OCI-LY7 (cell line): ENCODE measurements at regions of chr19 and their contacts with region 1.

Region 1: DNA sequence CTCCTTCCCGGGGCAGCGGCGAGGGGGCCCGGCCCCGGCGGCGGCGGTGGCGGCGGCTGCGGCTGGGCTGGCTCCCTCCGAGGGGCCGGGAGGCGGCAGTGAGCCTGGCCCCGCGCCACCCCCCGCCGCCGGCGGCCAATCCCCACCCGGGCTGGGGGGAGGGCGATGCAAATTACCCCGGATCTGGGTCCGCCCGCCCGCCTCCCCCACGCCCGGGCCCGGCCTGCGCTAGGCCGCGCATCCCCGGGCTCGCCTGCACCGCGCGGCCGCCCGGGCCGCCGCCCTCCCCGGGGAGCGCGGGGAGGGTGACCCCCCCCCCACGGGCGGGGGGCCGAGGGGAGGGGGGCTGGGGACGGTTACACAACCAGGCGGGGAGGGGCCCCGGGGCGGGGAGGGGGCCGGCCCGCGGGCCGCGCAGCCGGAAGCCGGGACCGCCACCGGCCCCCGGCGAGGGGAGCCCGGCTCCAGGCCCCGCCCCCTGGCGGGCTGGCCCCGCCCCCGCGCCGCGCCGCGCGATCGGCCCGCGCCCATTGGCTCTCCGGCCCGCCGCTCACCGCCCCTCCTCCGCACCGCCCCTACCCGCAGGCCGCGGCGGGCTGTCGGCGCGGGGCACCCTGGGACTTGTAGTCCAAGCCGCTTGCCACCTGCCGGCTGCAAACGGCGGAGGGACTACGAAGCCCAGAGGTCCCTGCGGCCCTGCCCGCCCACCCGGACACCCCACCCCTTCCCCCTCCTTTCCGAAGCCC is 1.1 kb downstream of the ZBTB7A start:
- DNase-seq: peak; percentile 98
- H3K4me3 ChIP-seq: peak overlapping the region; percentile 100
- H3K27ac ChIP-seq: no peak overlapping the region
- H3K4me1 ChIP-seq: peaks cover 51% of the 10 kb centered on the region
- CTCF ChIP-seq: no peak

Region 2: GRCh38 chr19:4007021-4007835 is 58.4 kb before region 1 on chr19 and contains the start of gene PIAS4:
- CTCF ChIA-PET with region 1: no interaction called
- POLR2A ChIA-PET with region 1: no interaction called
- intact Hi-C with region 1: loop called (anchors 1 kb)
- DNase-seq: peak; percentile 98
- H3K4me3 ChIP-seq: peak within 1 kb of the TSS; percentile 96
- H3K27ac ChIP-seq: peak within 1 kb of the TSS; percentile 80
- H3K4me1 ChIP-seq: peaks cover 14% of the 10 kb centered on the region
- CTCF ChIP-seq: 0 out of 2 replicates have a peak, but pooled peaks have one; percentile 13
- total RNA-seq, gene PIAS4: 25.3 and 31.5 TPM in 2 replicates

Region 3: DNA sequence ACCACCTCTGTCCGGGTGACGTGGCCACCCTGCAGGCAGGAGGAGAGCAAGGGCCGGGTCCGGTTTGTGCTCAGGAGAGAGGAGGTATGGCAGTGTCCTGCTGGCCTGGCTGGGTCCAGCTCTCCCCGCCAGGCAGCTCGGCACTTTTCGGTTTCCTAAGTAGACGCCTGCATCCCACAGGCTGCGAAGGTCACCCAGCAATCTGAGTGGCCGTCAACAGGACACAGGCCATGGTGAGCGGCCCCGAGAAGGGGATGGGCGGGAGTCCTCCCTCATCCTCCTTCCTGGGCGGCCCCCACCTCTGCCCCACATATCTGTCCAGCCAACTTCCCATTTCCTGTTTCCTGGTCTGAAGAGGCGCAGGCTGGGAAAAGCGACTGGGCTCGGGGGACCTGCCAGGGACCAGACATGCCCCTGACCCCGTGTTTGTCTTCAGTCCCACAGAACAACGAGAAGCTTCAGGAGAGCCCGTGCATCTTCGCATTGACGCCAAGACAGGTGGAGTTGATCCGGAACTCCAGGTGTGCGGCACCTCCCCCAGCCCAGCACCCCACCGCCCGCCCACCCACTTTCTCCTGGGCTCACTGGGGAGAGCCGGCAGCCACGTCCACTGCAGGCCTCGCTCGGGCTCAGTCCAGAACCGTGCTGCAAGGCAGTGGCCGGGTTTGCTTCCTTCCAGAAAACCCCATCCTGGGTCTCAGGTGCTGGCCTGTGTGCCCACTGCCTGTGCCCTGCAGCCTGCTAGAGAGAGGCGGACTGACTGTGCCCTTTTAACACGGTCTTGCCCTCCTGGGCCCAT is 41.8 kb before region 1 on chr19:
- CTCF ChIA-PET with region 1: no interaction called
- POLR2A ChIA-PET with region 1: no interaction called
- intact Hi-C with region 1: no loop called
- DNase-seq: no peak
- H3K4me3 ChIP-seq: no peak overlapping the region
- H3K27ac ChIP-seq: no peak overlapping the region
- H3K4me1 ChIP-seq: peaks cover 6% of the 10 kb centered on the region
- CTCF ChIP-seq: no peak

Region 4: GRCh38 chr19:4115050-4115817 is 49.6 kb after region 1 on chr19:
- CTCF ChIA-PET with region 1: no interaction called
- POLR2A ChIA-PET with region 1: no interaction called
- intact Hi-C with region 1: loop called (anchors 2 kb)
- DNase-seq: peak; percentile 76
- H3K4me3 ChIP-seq: peak overlapping the region; percentile 33
- H3K27ac ChIP-seq: peak overlapping the region; percentile 61
- H3K4me1 ChIP-seq: peaks cover 24% of the 10 kb centered on the region
- CTCF ChIP-seq: no peak; the same call in 1 of the 2 replicates

Region 5: GRCh38 chr19:4139614-4140236 is 74.1 kb after region 1 on chr19:
- CTCF ChIA-PET with region 1: interaction called, 3 read pairs
- POLR2A ChIA-PET with region 1: no interaction called
- intact Hi-C with region 1: loop called (anchors 5 kb)
- DNase-seq: peak; percentile 70
- H3K4me3 ChIP-seq: no peak overlapping the region
- H3K27ac ChIP-seq: no peak overlapping the region
- H3K4me1 ChIP-seq: peaks cover 8% of the 10 kb centered on the region
- CTCF ChIP-seq: peak; percentile 86

Region 6: GRCh38 chr19:4182084-4182810 is 116.6 kb after region 1 on chr19 and contains the starts of genes ANKRD24 and SIRT6:
- CTCF ChIA-PET with region 1: no interaction called
- POLR2A ChIA-PET with region 1: no interaction called
- intact Hi-C with region 1: loop called (anchors 5 kb)
- DNase-seq: peak; percentile 98
- H3K4me3 ChIP-seq: peak within 1 kb of the TSS; percentile 88
- H3K27ac ChIP-seq: peak within 1 kb of the TSS; percentile 76
- H3K4me1 ChIP-seq: peaks cover 25% of the 10 kb centered on the region
- CTCF ChIP-seq: no peak
- total RNA-seq, gene ANKRD24: 1.7 and 2.8 TPM in 2 replicates
- total RNA-seq, gene SIRT6: 29.1 and 31.7 TPM in 2 replicates

Region 7: GRCh38 chr19:4246767-4247593 is 181.4 kb after region 1 on chr19 and contains the start of gene YJU2:
- CTCF ChIA-PET with region 1: no interaction called
- POLR2A ChIA-PET with region 1: no interaction called
- intact Hi-C with region 1: loop called (anchors 2 kb)
- DNase-seq: peak; percentile 100
- H3K4me3 ChIP-seq: peak within 1 kb of the TSS; percentile 74
- H3K27ac ChIP-seq: peak within 1 kb of the TSS; percentile 83
- H3K4me1 ChIP-seq: peaks cover 27% of the 10 kb centered on the region
- CTCF ChIP-seq: peak; percentile 86
- total RNA-seq, gene YJU2: 37.8 and 38.2 TPM in 2 replicates